Endothelial cell of umbilical vein (primary cell): ENCODE measurements at regions of chr1 and their contacts with region 1.

Region 1: DNA sequence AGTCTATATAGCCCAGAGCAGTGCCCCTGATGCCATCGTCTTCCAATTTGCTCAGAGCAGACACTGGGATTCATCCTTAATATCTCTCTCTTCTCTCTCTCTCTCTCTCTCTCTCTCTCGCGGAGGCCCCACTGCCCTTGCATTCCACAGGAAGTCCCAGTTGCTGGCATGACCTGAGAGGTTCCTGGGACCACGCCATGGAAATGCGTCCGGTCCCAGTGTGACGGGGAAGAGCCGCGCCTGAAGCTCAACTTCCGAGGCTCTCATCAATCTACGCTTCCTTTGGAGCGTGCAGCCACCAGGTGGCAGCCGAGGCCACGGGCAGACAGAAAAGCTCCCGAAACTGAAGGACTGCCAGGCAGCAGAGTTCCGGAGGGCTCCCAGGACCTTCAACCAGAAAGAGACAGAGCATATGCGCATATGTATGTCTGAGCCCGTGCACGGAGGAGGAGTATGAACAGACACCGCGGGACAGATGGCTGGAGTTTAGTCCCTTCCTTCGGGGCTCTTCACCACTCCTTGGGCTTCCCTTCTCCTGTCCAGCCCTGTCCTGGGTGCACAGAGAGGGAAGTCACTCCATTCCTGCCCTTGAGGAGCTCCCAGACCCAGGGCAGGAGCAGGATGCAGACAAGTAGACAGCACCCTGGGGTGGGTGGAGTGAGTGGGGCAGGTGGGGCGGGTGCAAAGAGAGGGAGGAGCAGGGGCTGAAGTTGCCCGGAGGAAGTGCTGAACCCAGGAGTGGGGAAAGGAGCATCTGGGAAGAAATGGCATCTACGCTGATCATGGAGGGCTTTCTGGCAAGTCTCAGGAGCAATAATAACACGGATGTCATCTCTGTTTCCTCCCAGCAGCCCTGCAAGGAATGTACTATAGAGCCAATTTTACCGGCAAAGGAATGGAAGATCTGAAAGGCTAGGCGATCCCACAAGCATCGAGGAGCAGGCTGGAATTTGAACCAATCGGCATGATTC is 10.5 kb downstream of the PDZK1IP1 start:
- DNase-seq: peak; percentile 91
- H3K4me3 ChIP-seq: peak overlapping the region in 2 of 3 experiments; percentile 22 to 30
- H3K27ac ChIP-seq: no peak overlapping the region
- H3K4me1 ChIP-seq: peaks cover 19% of the 10 kb centered on the region
- H3K27me3 ChIP-seq: no peaks in the 10 kb centered on the region
- CTCF ChIP-seq: peak; percentile 91 to 93
- POLR2A ChIP-seq: no peak

Region 2: GRCh38 chr1:46536527-46536926 is 642.8 kb before region 1 on chr1:
- CTCF ChIA-PET with region 1: no interaction called
- POLR2A ChIA-PET with region 1: no interaction called
- dilution Hi-C with region 1: no loop called
- intact Hi-C with region 1: no loop called
- DNase-seq: no peak
- H3K4me3 ChIP-seq: no peak overlapping the region
- H3K27ac ChIP-seq: no peak overlapping the region
- H3K4me1 ChIP-seq: peaks cover 2% of the 10 kb centered on the region
- H3K27me3 ChIP-seq: peaks cover 25 to 38% of the 10 kb centered on the region in 2 experiments
- CTCF ChIP-seq: no peak
- POLR2A ChIP-seq: no peak

Region 3: GRCh38 chr1:46747683-46748288 is 431.5 kb before region 1 on chr1:
- CTCF ChIA-PET with region 1: interaction called, 16 read pairs
- POLR2A ChIA-PET with region 1: no interaction called
- dilution Hi-C with region 1: no loop called
- intact Hi-C with region 1: loop called (anchors 5 kb)
- DNase-seq: peak; percentile 63
- H3K4me3 ChIP-seq: no peak overlapping the region
- H3K27ac ChIP-seq: no peak overlapping the region
- H3K4me1 ChIP-seq: peaks cover 6% of the 10 kb centered on the region
- H3K27me3 ChIP-seq: peaks cover 12 to 18% of the 10 kb centered on the region in 2 experiments
- CTCF ChIP-seq: peak; percentile 49 to 73
- POLR2A ChIP-seq: no peak

Region 4: GRCh38 chr1:47002211-47002610 is 177.1 kb before region 1 on chr1:
- CTCF ChIA-PET with region 1: no interaction called
- POLR2A ChIA-PET with region 1: no interaction called
- dilution Hi-C with region 1: no loop called
- intact Hi-C with region 1: no loop called
- DNase-seq: no peak
- H3K4me3 ChIP-seq: no peak overlapping the region
- H3K27ac ChIP-seq: no peak overlapping the region
- H3K4me1 ChIP-seq: no peaks in the 10 kb centered on the region
- H3K27me3 ChIP-seq: peaks cover 0 to 2% of the 10 kb centered on the region in 2 experiments
- CTCF ChIP-seq: peak in 1 of 2 donors; percentile 14
- POLR2A ChIP-seq: no peak

Region 5: GRCh38 chr1:47211796-47212269 is 32.5 kb after region 1 on chr1:
- CTCF ChIA-PET with region 1: interaction called, 14 read pairs
- POLR2A ChIA-PET with region 1: no interaction called
- dilution Hi-C with region 1: no loop called
- intact Hi-C with region 1: no loop called
- DNase-seq: peak; percentile 96
- H3K4me3 ChIP-seq: no peak overlapping the region
- H3K27ac ChIP-seq: peak overlapping the region; percentile 92
- H3K4me1 ChIP-seq: peaks cover 58% of the 10 kb centered on the region
- H3K27me3 ChIP-seq: no peaks in the 10 kb centered on the region
- CTCF ChIP-seq: no peak
- POLR2A ChIP-seq: peak; percentile 87

Region 6: GRCh38 chr1:47262787-47263413 is 83.6 kb after region 1 on chr1:
- CTCF ChIA-PET with region 1: interaction called, 223 read pairs
- POLR2A ChIA-PET with region 1: no interaction called
- dilution Hi-C with region 1: no loop called
- intact Hi-C with region 1: loop called (anchors 1 kb)
- DNase-seq: peak; percentile 77
- H3K4me3 ChIP-seq: no peak overlapping the region
- H3K27ac ChIP-seq: no peak overlapping the region
- H3K4me1 ChIP-seq: no peaks in the 10 kb centered on the region
- H3K27me3 ChIP-seq: no peaks in the 10 kb centered on the region
- CTCF ChIP-seq: peak; percentile 60 to 62
- POLR2A ChIP-seq: no peak

Region 7: DNA sequence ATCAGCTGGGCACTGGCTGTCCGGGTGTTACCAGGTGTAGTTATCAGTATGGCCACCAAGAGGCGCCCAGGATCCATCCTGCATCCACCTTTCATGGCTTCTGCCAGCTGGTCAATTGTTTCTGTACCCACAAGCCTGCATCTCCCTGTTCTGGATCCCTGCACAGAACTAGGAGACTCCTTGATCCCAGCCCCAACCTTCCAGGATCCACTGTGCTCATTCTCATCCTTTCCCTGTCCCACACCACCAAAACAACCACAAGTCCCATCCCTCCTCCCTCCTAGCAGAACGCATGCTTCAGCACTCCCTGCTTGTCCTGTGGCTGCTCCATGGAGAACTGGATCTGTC is 209.6 kb after region 1 on chr1:
- CTCF ChIA-PET with region 1: interaction called, 27 read pairs
- POLR2A ChIA-PET with region 1: no interaction called
- dilution Hi-C with region 1: no loop called
- intact Hi-C with region 1: loop called (anchors 1 kb)
- DNase-seq: peak; percentile 68
- H3K4me3 ChIP-seq: no peak overlapping the region
- H3K27ac ChIP-seq: no peak overlapping the region
- H3K4me1 ChIP-seq: no peaks in the 10 kb centered on the region
- H3K27me3 ChIP-seq: peaks cover 0 to 2% of the 10 kb centered on the region in 2 experiments
- CTCF ChIP-seq: peak; percentile 66 to 84
- POLR2A ChIP-seq: no peak

Region 8: DNA sequence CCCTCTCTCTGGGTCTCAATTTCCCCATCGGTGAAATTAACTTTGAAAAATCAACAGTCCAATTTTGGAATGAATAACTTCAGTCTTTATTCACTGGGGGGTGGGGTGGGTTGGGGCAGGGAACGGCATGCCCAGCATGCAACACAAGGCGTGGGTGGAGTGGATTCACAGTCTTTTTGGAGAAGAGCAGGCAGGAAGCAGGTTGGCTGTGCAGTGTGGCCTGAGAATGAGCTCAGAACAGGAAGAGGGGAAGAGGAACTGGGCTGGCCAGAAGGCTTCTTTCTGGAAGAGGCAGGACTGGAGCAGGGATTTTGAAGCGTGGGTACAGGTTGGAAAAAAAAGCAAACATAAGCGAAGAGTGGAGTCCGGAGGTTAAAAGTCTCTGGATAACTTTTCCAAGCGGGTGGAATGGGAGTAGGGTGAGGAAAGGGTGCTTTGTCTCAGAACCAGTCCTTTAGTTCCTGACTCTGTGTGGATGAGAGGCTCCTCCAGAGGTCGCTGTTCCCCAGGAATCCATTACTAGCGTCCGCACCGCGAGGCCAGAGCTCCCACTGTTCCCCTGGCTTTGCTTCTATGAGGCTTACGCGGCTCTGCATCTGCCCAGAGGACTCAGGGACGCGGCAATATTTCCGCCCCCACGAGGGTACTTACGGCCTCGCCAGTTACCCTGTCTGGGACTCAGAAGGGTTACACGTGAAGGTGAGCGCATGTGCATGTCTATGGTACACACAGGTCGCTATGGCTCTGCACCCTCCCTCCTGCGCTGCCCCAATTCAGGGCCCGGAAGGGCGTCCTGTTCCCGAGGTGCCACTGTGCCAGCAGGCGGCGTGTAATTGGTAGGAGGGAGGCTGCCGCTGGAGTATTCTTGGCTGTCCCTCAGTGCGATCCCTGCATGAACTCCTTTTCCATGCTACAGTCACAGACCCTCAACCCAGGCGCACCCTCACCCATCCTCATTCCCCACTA is 253.1 kb after region 1 on chr1:
- CTCF ChIA-PET with region 1: interaction called, 90 read pairs
- POLR2A ChIA-PET with region 1: no interaction called
- dilution Hi-C with region 1: no loop called
- intact Hi-C with region 1: loop called (anchors 1 kb)
- DNase-seq: peak; percentile 80
- H3K4me3 ChIP-seq: no peak overlapping the region
- H3K27ac ChIP-seq: no peak overlapping the region
- H3K4me1 ChIP-seq: peaks cover 24% of the 10 kb centered on the region
- H3K27me3 ChIP-seq: peaks cover 10 to 18% of the 10 kb centered on the region in 2 experiments
- CTCF ChIP-seq: peak; percentile 80 to 83
- POLR2A ChIP-seq: no peak

Region 9: DNA sequence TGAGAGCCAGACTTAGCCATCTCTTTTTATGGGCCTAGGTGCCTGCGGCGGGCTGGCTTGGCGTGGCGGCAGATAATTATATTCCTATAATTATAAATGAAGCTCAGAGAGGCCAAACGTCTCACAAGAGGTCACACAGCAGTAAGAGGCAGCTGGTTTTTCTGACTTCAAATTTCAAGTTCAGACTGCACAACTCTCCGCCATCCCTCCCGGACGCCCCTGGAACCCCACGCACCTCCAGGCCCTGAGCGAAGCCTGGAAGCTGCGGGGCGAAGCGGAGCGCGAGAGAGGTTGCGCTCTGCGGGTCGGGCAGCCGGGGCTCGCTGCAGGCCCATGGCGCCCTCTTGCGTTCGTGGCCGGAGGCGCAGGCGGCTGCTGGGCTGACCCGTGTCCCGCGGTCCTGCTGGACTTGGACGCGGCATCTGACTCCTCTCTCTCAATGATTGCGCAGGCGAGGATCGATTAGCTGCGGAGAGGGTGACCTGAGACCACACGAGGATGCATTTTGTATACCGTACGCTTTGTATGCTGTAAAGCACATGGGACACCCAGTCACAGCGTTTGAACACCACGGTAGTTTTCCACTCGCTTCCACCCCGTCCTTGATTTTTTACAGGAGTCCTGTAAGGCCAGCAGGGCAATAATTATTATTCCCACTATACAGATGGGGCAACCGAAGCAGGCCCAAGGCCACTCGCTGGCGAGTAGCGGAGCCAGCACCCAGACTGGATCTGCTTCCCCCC is 531.2 kb after region 1 on chr1:
- CTCF ChIA-PET with region 1: interaction called, 18 read pairs
- POLR2A ChIA-PET with region 1: no interaction called
- dilution Hi-C with region 1: no loop called
- intact Hi-C with region 1: loop called (anchors 2 kb)
- DNase-seq: peak; percentile 56
- H3K4me3 ChIP-seq: no peak overlapping the region
- H3K27ac ChIP-seq: no peak overlapping the region
- H3K4me1 ChIP-seq: peaks cover 7% of the 10 kb centered on the region
- H3K27me3 ChIP-seq: peaks cover 59 to 66% of the 10 kb centered on the region in 2 experiments
- CTCF ChIP-seq: peak; percentile 98 to 99
- POLR2A ChIP-seq: no peak